ENCODE measurements at regions of chr2 and their contacts with region 1.

Region 1: GRCh38 chr2:45786030-45786835 is 134.8 kb downstream of the PRKCE start:
- DNase-seq: no peak
- ATAC-seq: no peak

Region 2: GRCh38 chr2:45935791-45936622 is 149.8 kb after region 1 on chr2:
- intact Hi-C with region 1: loop called (anchors 5 kb)
- DNase-seq: peak; percentile 95
- ATAC-seq: peak; percentile 89

Region 3: GRCh38 chr2:46029332-46029811 is 243.1 kb after region 1 on chr2:
- intact Hi-C with region 1: no loop called
- DNase-seq: peak; percentile 45
- ATAC-seq: peak; percentile 58

Measured in Right ventricle myocardium superior (tissue), 1 donor.